Right ventricle myocardium inferior (tissue), 1 donor: ENCODE measurements at regions of chr9 and their contacts with region 1.

Region 1: DNA sequence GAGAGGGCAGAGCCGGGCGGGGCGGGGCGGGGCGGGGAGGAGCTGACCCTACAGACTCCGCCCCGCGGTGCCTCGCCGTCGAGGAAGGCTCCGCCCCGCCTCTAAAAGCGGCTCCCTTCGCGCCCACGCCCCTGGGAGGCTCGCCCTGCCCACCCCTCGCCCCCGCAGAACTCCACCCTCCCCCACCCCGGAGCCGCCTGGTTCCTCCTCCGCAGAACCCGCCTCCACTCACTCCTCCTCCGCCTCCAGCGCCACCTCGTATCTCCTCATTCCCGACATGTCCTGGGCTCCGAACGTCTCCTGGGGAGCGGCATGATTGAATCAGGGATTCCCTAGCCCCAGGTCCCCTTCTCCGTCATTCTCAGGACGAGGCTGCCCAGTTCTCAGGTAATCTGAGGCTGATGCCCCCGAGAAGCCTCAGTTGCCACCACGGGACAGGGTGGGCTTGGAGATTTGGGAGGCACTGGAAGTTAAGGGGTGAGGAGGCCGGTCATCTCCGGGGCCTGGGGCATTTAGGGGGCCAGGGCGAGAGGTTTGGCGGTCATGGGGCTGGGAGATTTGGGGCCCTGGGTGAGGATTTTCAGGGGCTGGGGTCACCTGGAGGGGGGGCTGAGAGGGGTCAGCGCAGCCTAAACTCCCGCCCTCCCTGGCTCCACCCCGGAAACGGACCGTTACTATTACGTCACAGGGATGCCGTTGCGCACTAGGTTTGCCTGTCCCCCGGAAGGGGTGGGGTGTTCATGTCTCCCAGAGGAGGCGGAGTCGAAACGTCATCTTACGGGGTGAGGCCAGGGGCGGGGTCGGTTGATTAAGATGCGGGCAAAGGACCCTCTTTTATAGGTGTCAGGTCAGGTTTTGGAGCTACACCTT is 3.2 kb upstream of the CCL27 start:
- DNase-seq: peak; percentile 96
- ATAC-seq: peak; percentile 92

Region 2: DNA sequence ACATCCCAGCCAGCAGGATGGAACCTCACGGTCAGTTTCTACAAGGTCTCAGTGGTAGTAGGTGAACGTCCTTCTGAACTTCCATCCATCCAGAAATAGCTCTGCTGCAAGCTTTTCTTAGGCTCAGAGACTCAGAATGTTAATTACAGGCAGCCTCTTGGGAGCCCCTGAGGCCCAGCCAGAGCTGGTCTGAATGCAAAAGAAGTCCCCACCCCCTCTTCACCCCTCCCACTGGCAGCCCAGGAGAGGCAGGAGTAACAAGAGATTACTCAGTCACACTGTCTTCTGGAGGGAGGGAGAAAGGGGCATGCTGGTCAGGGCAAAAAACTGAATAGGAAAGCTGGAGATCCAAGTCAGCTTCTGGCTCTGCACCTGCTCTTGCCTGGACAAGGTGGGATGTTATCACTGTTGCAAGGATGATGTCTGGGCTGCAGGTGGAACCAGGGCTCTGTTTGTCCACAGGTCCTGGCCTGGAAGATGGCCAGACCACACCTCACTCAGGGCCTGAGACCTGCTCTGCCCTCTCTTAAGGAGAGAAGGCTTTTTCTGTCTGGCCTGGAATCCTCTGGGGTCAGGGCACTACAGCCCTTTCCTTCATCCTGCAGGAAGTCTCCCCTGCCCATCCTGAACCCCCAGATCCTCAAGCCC is 151.9 kb before region 1 on chr9:
- intact Hi-C with region 1: no loop called
- DNase-seq: no peak
- ATAC-seq: no peak

Region 3: GRCh38 chr9:34611829-34612630 is 53.6 kb before region 1 on chr9 and contains the start of gene RPP25L:
- intact Hi-C with region 1: no loop called
- DNase-seq: peak; percentile 95
- ATAC-seq: peak; percentile 95
- total RNA-seq, gene RPP25L: 38.3 TPM

Region 4: DNA sequence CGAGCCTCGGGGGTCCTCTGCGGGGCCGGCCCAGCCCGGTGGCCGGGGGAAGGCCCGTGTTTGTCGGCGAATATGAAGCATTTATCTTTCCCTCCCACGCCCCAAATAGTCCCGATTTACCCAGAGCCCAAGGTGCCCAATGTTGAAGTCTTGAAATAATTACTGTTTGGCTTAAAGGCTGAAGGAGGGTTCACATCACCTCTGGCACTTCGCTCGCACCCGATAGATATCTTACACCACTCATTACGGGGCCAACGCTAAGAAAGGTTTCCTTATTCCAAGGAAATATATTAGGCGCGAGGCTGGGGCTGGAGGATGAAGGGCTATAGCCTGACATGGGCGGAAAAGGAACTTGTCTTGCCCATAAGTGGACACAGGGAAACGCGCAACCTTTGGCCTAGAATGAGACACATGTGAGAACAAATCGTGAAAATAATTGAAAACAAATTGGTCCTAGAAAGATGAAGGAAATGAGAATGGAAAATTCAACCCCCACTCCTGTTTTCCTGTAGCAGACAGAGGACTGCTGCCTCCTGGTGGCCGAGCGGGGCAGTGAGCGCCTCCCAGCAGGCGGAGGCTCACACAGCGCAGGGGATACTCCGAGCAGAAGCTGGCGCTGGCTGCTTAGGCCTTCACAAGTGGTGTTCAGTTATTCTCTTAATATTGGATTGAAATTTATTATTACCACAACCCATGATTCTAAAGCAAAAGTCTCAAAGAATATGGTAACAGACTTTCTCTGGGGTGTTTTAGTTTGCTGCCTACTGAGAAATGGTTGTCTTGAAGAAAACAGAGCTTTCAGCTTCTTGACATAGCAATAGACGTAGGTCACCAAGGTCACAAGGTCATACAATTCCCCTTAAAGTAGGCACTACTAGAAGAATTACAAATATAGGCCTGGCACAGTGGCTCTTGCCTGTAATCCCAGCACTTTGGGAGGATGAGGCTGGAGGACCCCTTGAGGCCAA is 36.4 kb after region 1 on chr9:
- intact Hi-C with region 1: loop called (anchors 2 kb)
- DNase-seq: peak; percentile 92
- ATAC-seq: peak; percentile 94

Region 5: DNA sequence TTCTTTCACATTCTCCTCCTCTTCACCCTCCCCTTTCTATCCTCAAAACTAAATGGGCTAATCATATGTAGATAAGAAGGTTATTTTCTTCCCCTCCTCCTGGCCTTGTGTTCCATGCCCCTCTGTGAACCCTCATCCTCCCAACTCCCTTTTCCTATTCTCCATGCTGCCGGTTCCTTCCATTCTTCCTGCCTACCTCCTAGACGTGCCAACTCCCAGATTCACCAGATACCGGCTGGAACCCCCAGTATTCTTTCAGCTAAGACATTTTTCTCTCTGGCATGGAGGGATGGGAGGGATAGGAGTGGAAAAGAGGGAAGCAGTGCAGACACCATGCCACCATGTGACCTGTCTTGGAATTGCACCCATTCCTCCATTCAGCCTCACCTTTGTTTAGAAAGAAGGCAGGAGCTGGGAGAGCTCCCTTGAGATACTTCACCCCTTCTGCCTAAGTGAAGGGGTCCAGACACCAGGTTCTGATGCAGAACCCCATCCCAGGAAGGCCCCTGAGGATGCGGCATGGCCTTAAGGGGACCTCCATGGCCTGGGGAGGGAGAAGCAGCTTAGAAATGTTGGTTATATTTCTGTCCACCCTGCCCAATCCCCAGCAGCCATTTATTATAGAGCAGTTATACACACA is 328.8 kb after region 1 on chr9:
- intact Hi-C with region 1: loop called (anchors 5 kb)
- DNase-seq: no peak
- ATAC-seq: no peak